ENCODE measurements at regions of chr7 and their contacts with region 1.

Region 1: DNA sequence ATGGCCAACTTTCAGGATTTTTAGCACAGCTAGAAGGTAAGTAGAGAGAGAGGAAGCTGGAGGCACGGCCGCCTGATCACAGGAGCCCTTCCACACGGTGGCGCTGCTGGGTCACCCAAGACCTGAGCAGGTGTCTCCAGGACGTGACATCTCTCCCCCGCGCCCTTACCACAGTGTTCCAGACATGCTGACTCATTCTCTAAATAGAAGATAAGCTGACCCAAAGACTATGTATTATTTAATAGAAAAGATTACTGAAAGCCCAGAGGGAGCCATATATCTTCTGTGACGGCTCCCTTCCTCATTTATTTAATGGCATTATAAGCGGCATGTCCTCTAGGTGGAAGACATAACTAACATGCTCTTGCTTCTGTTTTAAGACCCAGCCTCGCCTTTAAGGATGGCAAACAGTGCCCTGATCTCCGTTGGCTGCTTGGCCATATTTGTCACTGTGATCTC is 26.0 kb upstream of the MALSU1 start:
- DNase-seq: peak; percentile 80
- H3K4me3 ChIP-seq: peak overlapping the region; percentile 7 to 25
- H3K27ac ChIP-seq: peak overlapping the region in 1 of 2 experiments; percentile 30; a peak in 2 of 4 replicates
- H3K4me1 ChIP-seq: peaks cover 5 to 9% of the 10 kb centered on the region in 2 experiments
- H3K27me3 ChIP-seq: no peaks in the 10 kb centered on the region
- CTCF ChIP-seq: peak; percentile 99
- EP300 ChIP-seq: peak in 1 of 2 experiments; percentile 71; a peak in 2 of 4 replicates
- RAD21 ChIP-seq: peak; percentile 83

Region 2: DNA sequence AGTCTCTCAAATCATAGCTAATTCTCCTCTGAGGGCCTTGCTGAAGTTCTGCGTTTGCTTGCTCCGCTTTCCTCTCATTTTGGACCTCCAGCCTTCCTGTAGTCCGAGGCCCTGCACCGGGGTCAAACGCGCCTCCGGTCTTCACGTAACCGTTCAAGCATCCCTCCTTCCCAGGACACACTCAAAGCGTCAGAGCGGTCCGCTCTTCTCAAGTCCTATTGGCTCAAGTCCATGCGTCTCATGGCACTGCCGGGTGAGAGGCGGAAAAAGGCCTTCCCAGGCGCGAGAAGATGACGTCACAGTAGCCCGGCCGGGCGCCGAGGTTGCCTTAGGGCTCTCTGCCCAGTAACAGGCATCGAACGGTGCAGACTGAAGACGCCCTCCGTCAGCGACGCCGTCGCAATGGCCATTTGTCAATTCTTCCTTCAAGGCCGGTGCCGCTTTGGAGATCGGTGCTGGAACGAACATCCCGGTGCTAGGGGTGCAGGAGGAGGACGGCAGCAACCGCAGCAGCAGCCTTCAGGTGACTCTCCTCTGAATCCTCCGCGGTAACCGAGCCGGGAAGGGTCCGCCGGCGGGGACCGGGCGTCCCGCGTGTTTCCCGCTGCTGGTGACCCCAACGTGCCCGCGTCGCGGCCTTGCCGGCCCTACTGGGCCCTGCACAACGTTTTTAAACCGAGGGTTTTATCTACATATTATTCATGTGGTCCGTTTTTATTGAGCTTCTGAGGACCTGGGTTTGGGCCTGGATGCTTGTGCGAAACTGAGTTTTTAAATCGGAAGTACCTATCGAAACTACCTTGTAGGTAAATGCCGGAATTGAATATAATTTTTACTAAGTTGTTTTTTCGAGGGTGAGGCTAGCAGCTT is 91.3 kb before region 1 on chr7 and contains the start of gene NUP42:
- CTCF ChIA-PET with region 1: interaction called, 107 read pairs
- POLR2A ChIA-PET with region 1: interaction called, 4 read pairs
- DNase-seq: peak; percentile 97
- H3K4me3 ChIP-seq: peak within 1 kb of the TSS; percentile 89 to 94
- H3K27ac ChIP-seq: peak within 1 kb of the TSS; percentile 88 to 96
- H3K4me1 ChIP-seq: peaks cover 8 to 13% of the 10 kb centered on the region in 2 experiments; a peak in 3 of 4 replicates
- H3K27me3 ChIP-seq: no peaks in the 10 kb centered on the region
- CTCF ChIP-seq: no peak
- EP300 ChIP-seq: peak; percentile 8 to 80; a peak in 3 of 4 replicates
- RAD21 ChIP-seq: peak; percentile 33
- polyA plus RNA-seq, gene NUP42: 22.7 and 38.1 TPM in 2 replicates

Region 3: GRCh38 chr7:23226844-23227450 is 46.2 kb before region 1 on chr7:
- CTCF ChIA-PET with region 1: interaction called, 15 read pairs
- POLR2A ChIA-PET with region 1: no interaction called
- DNase-seq: no peak
- H3K4me3 ChIP-seq: no peak overlapping the region
- H3K27ac ChIP-seq: no peak overlapping the region
- H3K4me1 ChIP-seq: no peaks in the 10 kb centered on the region; a peak in 1 of 4 replicates
- H3K27me3 ChIP-seq: 0 out of 2 replicates have a peak, but pooled peaks cover 4% of the 10 kb centered on the region
- CTCF ChIP-seq: no peak
- EP300 ChIP-seq: no peak
- RAD21 ChIP-seq: no peak

Region 4: DNA sequence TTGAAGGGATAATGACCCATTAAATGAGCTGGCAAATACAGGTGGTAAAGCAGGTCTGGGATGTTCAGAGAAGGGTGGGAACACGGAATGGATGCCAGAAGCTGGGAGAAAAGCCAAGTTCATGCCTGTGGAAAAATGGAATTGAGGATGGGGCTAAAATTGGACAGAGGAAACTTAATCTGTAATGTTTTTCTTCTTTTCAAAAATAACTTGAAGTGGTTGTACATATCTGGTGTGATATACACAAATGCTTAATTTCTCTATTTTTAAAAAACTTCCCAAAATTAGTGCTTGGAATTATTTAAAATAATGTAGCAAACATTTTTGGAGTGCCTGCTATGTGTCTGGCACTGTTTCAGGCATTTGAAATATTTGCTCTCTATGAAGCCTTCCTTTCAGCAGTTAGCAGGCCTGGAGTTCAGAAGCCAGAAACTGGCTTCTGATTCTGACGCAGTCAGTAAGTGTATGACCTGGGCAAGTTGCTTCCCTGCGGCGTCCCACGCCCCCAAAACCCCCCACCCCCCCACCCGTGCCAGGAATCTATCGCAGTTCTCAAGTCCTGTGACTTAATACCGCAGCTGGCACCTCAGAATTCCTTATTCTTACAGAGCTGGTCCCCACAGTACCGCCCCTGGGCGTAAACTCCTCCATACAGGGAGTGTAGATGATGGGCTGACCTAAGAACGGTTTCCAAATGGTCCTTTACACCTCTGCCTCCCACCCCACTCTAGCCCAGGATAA is 25.1 kb after region 1 on chr7:
- CTCF ChIA-PET with region 1: interaction called, 69 read pairs
- POLR2A ChIA-PET with region 1: interaction called, 3 read pairs
- DNase-seq: peak; percentile 44
- H3K4me3 ChIP-seq: peak overlapping the region; percentile 85 to 100
- H3K27ac ChIP-seq: peak overlapping the region; percentile 77 to 88
- H3K4me1 ChIP-seq: peaks cover 8 to 20% of the 10 kb centered on the region in 2 experiments; a peak in 3 of 4 replicates
- H3K27me3 ChIP-seq: no peaks in the 10 kb centered on the region
- CTCF ChIP-seq: no peak
- EP300 ChIP-seq: no peak
- RAD21 ChIP-seq: no peak

Region 5: GRCh38 chr7:23454881-23455506 is 181.8 kb after region 1 on chr7:
- CTCF ChIA-PET with region 1: interaction called, 45 read pairs
- POLR2A ChIA-PET with region 1: no interaction called
- DNase-seq: no peak
- H3K4me3 ChIP-seq: no peak overlapping the region
- H3K27ac ChIP-seq: no peak overlapping the region
- H3K4me1 ChIP-seq: peaks cover 0 to 2% of the 10 kb centered on the region in 2 experiments; a peak in 2 of 4 replicates
- H3K27me3 ChIP-seq: no peaks in the 10 kb centered on the region
- CTCF ChIP-seq: no peak
- EP300 ChIP-seq: no peak
- RAD21 ChIP-seq: no peak

Region 6: DNA sequence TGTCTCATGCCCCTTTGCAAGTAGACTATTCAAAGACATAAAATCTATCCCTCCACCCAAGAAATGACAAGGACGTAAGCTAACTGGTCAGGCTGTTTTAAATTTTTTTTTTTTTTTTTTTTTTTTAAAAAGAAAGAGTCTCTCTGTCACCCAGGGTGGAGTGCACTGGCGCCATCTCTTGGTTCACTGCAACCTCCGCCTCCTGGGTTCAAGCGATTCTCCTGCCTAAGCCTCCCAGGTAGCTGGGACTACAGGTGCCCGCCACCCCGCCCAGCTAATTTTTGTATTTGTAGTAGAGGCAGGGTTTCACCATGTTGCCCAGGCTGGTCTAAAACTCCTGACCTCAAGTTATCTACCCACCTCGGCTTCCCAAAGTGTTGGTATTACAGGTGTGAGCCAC is 247.4 kb after region 1 on chr7:
- CTCF ChIA-PET with region 1: interaction called, 23 read pairs
- POLR2A ChIA-PET with region 1: no interaction called
- DNase-seq: no peak
- H3K4me3 ChIP-seq: no peak overlapping the region
- H3K27ac ChIP-seq: no peak overlapping the region
- H3K4me1 ChIP-seq: peaks cover 0 to 13% of the 10 kb centered on the region in 2 experiments; a peak in 3 of 4 replicates
- H3K27me3 ChIP-seq: no peaks in the 10 kb centered on the region
- CTCF ChIP-seq: peak; percentile 53
- EP300 ChIP-seq: no peak
- RAD21 ChIP-seq: peak; percentile 47

Region 7: GRCh38 chr7:23662124-23662983 is 389.2 kb after region 1 on chr7:
- CTCF ChIA-PET with region 1: no interaction called
- POLR2A ChIA-PET with region 1: no interaction called
- DNase-seq: no peak
- H3K4me3 ChIP-seq: no peak overlapping the region
- H3K27ac ChIP-seq: no peak overlapping the region
- H3K4me1 ChIP-seq: no peaks in the 10 kb centered on the region
- H3K27me3 ChIP-seq: no peaks in the 10 kb centered on the region
- CTCF ChIP-seq: no peak
- EP300 ChIP-seq: no peak
- RAD21 ChIP-seq: no peak

Region 8: DNA sequence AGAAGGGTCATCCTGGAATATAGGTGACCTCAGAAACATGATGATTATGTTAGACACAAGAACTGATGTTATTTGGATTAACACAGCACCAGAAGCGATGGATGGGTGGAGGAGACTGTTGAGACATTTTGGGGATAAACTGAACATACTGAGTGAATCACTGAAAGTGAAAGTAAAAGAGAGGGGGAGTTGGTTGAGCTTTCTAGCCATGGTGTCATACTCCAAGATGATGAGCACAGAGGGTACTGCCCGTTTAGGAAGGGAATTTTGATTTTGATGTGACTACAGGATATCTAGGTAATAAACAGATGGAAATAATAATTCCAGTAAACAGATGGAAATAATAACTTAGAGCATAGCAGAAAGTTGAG is 762.9 kb after region 1 on chr7:
- CTCF ChIA-PET with region 1: no interaction called
- POLR2A ChIA-PET with region 1: no interaction called
- DNase-seq: no peak
- H3K4me3 ChIP-seq: no peak overlapping the region; a peak in 1 of 4 replicates
- H3K27ac ChIP-seq: no peak overlapping the region
- H3K4me1 ChIP-seq: peaks cover 0 to 2% of the 10 kb centered on the region in 2 experiments; a peak in 1 of 4 replicates
- H3K27me3 ChIP-seq: no peaks in the 10 kb centered on the region
- CTCF ChIP-seq: no peak
- EP300 ChIP-seq: no peak
- RAD21 ChIP-seq: no peak